ENCODE measurements at regions of chr2 and their contacts with region 1.

Region 1: GRCh38 chr2:103264058-103264768 is 502.4 kb downstream of the TMEM182 start:
- DNase-seq: no peak

Region 2: GRCh38 chr2:103288708-103289414 is 24.6 kb after region 1 on chr2:
- intact Hi-C with region 1: loop called in 1 of 2 experiments (anchors 2 kb)
- DNase-seq: no peak